OCI-LY7 (cell line): ENCODE measurements at regions of chr4 and their contacts with region 1.

Region 1: GRCh38 chr4:176309046-176309445 is 10.7 kb upstream of the SPCS3 start:
- DNase-seq: peak; percentile 75
- H3K4me3 ChIP-seq: peak overlapping the region; percentile 37
- H3K27ac ChIP-seq: peak overlapping the region; percentile 60
- H3K4me1 ChIP-seq: peaks cover 39% of the 10 kb centered on the region
- CTCF ChIP-seq: no peak

Region 2: DNA sequence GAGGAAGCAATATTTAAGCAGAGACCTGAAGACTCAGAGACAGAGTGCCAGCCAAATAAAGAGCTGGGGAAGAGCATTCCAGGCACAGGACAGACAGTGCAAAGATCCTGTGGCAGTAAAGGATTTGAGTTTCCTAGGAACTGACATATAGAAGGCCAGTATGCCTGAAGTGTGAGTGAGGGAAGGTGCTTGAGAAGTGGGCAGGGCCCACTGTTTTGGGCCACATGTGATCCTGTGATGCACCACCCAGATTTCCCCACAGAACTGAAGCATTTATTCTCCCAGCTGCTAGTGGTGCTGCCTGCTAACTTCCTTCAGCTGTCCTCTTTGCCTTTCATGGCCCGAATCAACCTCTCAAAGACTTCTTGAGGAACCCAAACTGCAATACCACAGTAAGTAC is 16.1 kb before region 1 on chr4:
- CTCF ChIA-PET with region 1: no interaction called
- POLR2A ChIA-PET with region 1: interaction called, 18 read pairs
- intact Hi-C with region 1: no loop called
- DNase-seq: no peak
- H3K4me3 ChIP-seq: no peak overlapping the region
- H3K27ac ChIP-seq: no peak overlapping the region
- H3K4me1 ChIP-seq: no peaks in the 10 kb centered on the region
- CTCF ChIP-seq: no peak